Activated CD8-positive, alpha-beta T cell treated with anti-CD3 and anti-CD28 coated beads, Interleukin-2, amount 10 ng/mL, durations not matched to agents 7 days and 5 days (primary cell): ENCODE measurements at regions of chr17 and their contacts with region 1.

Region 1: DNA sequence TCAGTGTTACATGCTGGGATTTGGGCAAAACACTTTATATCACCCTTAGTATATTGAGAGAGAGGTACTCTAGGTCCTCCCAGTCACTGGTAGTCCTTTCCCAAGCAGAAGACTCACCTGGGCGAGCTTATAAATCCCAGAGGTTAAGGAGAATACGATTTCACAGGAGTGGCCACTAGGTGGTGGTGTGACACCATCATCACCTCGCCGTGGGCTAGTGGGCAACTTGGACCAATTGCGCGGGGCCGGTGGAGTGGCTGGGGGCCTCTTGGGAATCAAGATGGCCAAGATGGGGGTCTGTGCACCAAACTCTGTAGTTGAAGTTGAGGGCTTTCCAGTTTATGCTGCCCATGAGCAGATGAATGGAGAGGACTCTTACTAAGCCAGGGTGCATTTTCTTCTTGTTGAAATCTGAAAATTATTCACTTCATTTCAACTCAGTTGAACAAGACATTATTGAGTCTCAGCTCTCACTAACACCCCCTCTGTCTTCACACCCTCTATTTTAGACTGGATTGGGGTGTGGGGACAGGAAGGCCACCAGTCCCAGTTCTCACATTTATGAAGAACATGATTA is 38.2 kb upstream of the PIRT start:
- DNase-seq: peak; percentile 36
- ATAC-seq: no peak
- H3K4me3 Mint-ChIP-seq: no peak overlapping the region
- H3K27ac Mint-ChIP-seq: no peak overlapping the region
- H3K4me1 Mint-ChIP-seq: no peaks in the 10 kb centered on the region
- H3K27me3 Mint-ChIP-seq: no peaks in the 10 kb centered on the region

Region 2: GRCh38 chr17:10812674-10813073 is 63.4 kb before region 1 on chr17:
- CTCF ChIA-PET with region 1: no interaction called
- POLR2A ChIA-PET with region 1: no interaction called
- DNase-seq: no peak
- ATAC-seq: no peak
- H3K4me3 Mint-ChIP-seq: no peak overlapping the region
- H3K27ac Mint-ChIP-seq: no peak overlapping the region
- H3K4me1 Mint-ChIP-seq: no peaks in the 10 kb centered on the region
- H3K27me3 Mint-ChIP-seq: peaks cover 2% of the 10 kb centered on the region

Region 3: DNA sequence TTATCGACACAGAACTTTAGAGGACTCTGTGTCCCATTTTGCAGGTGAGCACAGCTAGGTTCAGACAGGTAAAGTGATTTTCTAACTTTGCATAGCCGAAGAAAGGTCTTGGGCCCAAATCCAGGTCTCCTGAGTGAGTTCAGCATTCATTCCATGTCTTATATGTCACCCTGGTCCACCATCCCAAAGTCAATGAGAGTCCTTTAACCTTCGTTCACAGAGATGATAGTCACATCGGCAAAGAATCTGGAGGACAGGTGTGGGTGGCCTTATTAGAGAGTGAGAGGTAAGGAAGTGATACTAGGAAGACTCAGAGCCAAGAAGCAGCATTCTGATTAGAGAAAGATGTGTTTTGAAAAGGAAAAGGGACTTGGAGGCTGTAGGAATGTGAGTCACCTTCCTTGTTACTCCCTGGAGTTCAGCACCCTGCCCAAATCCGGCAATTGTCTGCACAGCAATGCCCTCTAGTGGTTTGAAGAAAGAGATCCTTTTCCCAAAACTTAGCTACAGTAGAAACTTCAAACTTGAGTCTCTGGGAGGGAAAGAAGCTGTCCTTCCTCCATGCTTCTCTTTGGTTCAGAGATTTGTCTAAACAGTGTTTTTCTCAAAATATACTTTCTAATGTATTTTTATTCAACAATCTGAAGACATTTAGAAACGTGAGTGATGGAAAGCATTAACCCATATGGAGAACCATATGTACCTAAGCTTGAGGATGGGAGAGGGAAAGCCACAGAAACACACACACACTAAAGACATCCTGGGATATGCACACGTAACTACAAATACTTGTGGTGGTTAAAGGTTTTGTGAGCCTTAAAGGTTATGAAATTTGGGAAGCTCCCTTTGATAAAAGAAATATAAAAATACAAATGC is 268.5 kb after region 1 on chr17:
- CTCF ChIA-PET with region 1: interaction called, 11 read pairs
- POLR2A ChIA-PET with region 1: no interaction called
- DNase-seq: peak; percentile 20
- ATAC-seq: no peak
- H3K4me3 Mint-ChIP-seq: no peak overlapping the region
- H3K27ac Mint-ChIP-seq: no peak overlapping the region
- H3K4me1 Mint-ChIP-seq: no peaks in the 10 kb centered on the region
- H3K27me3 Mint-ChIP-seq: no peaks in the 10 kb centered on the region

Region 4: GRCh38 chr17:11644261-11645212 is 768.5 kb after region 1 on chr17:
- CTCF ChIA-PET with region 1: interaction called, 18 read pairs
- POLR2A ChIA-PET with region 1: no interaction called
- DNase-seq: peak; percentile 60
- ATAC-seq: no peak
- H3K4me3 Mint-ChIP-seq: no peak overlapping the region
- H3K27ac Mint-ChIP-seq: no peak overlapping the region
- H3K4me1 Mint-ChIP-seq: no peaks in the 10 kb centered on the region
- H3K27me3 Mint-ChIP-seq: no peaks in the 10 kb centered on the region